ENCODE measurements at regions of chr1 and their contacts with region 1.

Region 1: DNA sequence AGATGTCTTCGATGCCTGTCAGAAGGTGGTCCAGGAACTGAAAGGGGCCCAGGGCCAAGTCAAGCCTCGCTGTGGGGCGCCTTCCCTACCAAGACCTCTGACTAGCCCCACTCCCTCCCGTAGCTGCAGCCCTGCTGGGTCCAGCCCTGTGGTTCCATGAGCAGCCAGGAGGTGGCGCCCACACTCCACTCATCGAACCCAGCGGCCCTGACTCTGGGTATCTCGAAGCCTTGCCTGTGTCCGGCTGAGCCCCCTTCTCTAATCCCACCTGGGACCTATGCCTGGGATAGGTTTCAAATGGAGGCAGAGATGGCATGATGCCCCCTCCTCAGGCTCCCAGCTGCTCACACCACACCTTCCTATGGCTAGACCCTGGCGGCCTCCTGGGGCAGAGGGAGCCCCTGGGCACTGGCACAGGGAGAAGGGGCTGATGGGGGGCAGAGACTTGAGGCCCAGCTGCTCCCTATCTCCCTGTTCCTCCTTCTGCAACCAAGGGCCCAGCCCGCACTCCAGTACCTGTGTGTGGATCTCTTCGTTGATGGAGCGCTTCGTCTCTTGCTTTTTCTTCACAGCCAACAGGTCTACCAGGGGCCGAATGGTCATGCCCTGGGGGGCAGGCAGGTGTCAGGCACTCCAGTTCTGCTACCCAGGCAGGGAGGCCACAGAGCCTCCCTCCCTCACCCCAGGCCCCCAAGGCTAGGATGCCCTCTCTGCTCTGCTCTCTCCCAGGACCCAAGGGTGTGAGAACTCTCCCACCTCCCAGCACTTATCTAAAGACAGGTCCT is 52.0 kb downstream of the SLC9A1 start:
- DNase-seq: peak; percentile 90
- H3K4me3 ChIP-seq: no peak overlapping the region
- H3K27ac ChIP-seq: no peak overlapping the region
- H3K4me1 ChIP-seq: peaks cover 0 to 25% (median 22%) of the 10 kb centered on the region in 4 donors
- H3K27me3 ChIP-seq: no peaks in the 10 kb centered on the region
- CTCF ChIP-seq: peak; percentile 94 to 99 (median 96)
- EP300 ChIP-seq: no peak
- POLR2A ChIP-seq: no peak

Region 2: GRCh38 chr1:27031235-27032118 is 71.4 kb before region 1 on chr1:
- intact Hi-C with region 1: no loop called
- DNase-seq: peak; percentile 93
- H3K4me3 ChIP-seq: peak overlapping the region; percentile 2 to 48 (median 38)
- H3K27ac ChIP-seq: peak overlapping the region; percentile 77 to 83 (median 82)
- H3K4me1 ChIP-seq: peaks cover 0 to 27% (median 26%) of the 10 kb centered on the region in 4 donors
- H3K27me3 ChIP-seq: no peaks in the 10 kb centered on the region
- CTCF ChIP-seq: no peak
- EP300 ChIP-seq: peak in 1 of 4 donors; percentile 69
- POLR2A ChIP-seq: no peak

Region 3: GRCh38 chr1:27142464-27142863 is 39.6 kb after region 1 on chr1:
- intact Hi-C with region 1: no loop called
- DNase-seq: no peak
- H3K4me3 ChIP-seq: no peak overlapping the region
- H3K27ac ChIP-seq: peak overlapping the region in 3 of 4 donors; percentile 16 to 89 (median 85)
- H3K4me1 ChIP-seq: peaks cover 0 to 94% (median 71%) of the 10 kb centered on the region in 4 donors
- H3K27me3 ChIP-seq: no peaks in the 10 kb centered on the region
- CTCF ChIP-seq: no peak
- EP300 ChIP-seq: no peak
- POLR2A ChIP-seq: no peak

Region 4: DNA sequence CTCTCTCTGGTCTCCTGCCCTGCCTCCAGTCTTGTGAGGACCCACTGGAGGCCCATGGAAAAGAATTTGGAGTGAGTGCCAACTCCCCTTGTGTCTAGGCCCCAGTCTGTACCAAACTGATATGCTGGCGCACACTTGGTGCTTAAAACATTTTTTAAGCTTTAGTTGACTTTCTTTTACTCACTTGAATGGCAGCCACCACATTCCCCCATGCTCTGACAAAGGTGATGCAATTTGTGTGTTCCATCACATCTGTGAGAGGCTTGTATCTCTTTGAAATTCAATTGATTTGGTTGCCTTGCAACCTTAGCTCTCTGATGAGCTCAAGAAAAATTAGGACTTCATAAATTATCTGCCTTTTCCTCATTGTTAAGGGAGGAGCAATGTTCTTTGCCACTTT is 101.0 kb after region 1 on chr1:
- intact Hi-C with region 1: loop called (anchors 2 kb)
- DNase-seq: no peak
- H3K4me3 ChIP-seq: no peak overlapping the region
- H3K27ac ChIP-seq: no peak overlapping the region
- H3K4me1 ChIP-seq: no peaks in the 10 kb centered on the region
- H3K27me3 ChIP-seq: no peaks in the 10 kb centered on the region
- CTCF ChIP-seq: no peak
- EP300 ChIP-seq: no peak
- POLR2A ChIP-seq: no peak

Region 5: DNA sequence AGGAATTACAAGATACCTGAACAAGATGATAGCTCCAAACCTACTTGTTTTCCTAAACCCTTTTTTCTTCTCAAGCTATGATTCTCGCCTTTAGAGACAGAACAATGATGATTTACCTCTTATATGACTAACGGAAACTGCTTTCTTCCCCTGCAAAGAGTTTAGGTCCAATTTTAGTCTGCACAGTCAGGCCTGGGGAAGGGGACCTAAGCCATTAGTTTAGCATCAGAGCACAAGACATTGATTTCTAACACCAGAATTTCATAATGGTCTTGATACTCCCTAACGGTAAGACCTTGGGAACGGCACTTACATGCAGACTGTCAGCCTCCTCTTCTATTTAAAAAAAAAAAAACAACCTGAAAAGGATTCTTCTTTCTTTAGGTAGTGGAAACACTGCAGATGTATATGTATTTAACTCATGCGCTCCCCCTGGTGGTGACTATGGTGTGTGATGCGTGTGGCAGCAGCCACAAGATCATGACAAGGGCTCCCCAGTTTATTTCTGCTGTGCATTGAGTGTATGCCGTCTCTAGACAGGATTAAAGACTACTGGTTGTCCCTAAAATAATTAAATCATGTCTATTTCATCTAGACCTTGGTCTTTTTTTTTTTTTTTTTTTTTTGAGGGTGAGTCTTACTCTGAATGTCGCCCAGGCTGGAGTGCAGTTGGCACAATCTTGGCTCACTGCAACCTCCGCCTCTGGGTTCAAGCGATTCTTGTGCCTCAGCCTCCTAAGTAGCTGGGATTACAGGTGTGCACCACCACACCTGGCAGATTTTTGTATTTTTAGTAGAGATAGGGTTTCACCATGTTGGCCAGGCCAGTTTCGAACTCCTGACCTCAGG is 181.8 kb after region 1 on chr1:
- intact Hi-C with region 1: loop called (anchors 1 kb)
- DNase-seq: peak; percentile 88
- H3K4me3 ChIP-seq: no peak overlapping the region
- H3K27ac ChIP-seq: no peak overlapping the region
- H3K4me1 ChIP-seq: no peaks in the 10 kb centered on the region
- H3K27me3 ChIP-seq: no peaks in the 10 kb centered on the region
- CTCF ChIP-seq: peak; percentile 58 to 80 (median 72)
- EP300 ChIP-seq: no peak
- POLR2A ChIP-seq: no peak

Measured in sigmoid colon (tissue), 7 donors.